ENCODE measurements at regions of chr17 and their contacts with region 1.

Region 1: DNA sequence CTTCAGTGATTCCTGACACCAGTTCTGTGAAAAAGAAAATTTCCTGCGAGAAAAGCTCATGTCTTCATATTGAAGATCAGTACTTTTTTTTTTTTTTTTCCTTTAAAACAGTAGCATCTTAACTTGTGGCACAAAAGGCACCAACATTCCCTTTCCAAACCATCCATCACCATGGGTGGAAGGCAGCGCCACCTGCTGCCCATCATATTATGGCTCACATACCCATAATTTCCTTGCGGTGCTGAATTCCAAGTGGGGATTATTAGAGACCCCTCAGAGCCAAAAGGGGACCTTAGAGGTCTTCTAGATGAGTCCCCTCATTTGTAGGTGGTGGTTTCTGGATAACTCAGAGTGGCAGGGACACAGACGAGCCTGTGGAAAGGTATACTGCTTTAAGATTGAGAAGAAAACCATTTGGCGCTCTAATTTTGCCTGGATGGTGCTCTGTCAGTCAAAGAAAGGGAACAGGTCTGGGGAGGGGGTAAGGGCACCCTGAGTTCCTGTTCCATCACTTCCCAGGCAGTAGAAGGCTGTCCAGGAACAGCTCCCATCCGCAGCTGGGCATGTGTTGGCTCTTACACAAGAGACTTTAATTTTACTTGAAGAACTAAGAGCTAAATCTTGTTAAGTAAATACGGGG is 7.9 kb upstream of the SOST start:
- DNase-seq: no peak
- H3K4me3 ChIP-seq: no peak overlapping the region
- CTCF ChIP-seq: peak; percentile 78

Region 2: DNA sequence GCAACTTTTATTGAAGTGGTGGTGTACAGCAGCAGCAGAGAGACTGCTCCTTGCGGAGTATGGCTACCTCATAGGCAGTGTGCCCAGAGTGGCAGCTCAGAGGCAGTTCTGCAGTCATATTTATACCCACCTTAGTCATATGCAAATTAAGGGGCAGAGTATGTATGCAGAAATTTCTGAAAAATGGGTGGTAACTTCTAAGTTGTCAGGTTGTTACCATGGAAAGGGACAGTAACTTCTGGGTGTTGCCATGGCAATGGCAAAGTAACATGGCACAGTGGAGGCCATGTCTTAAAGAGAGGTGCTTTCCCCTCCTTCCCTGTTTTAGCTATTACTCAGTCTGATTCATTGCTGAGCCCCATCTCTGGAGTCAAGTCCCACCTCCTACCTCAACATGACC is 158.2 kb before region 1 on chr17:
- CTCF ChIA-PET with region 1: no interaction called
- POLR2A ChIA-PET with region 1: no interaction called
- DNase-seq: no peak
- H3K4me3 ChIP-seq: no peak overlapping the region
- CTCF ChIP-seq: no peak

Region 3: DNA sequence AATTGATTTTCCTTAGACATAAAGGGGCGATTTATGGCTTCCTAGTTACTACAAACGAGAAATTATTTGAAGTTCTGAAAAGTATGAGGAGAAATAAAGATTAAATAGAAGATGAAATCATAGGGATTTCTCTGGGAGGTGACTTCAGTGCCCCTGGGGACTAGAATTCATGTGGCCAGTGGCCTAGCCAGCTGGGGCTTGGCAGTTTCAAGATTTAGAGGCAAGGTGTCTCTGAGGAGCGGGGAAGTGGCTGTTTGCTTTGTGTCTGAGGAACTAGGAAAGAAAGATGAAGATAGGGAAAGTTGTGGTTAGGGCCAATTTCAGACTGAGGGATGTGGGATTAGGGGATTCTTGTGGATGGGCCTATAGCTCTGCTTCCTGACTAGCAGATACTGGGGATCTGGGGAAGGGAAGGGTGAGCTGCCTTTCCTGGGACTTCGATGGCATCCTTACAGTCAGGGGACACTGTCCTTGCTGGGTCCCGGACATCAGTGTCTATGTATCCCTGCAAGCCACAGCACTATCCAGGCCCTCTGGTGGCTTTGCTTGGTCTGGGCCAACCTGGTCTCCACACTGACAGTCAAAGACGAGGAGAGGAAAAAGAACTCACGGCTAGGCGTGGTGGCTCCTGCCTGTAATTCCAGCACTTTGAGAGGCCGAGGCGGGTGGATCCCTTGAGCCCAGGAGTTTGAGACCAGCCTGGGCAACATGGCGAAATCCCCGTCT is 82.4 kb before region 1 on chr17:
- CTCF ChIA-PET with region 1: interaction called, 1,463 read pairs
- POLR2A ChIA-PET with region 1: no interaction called
- DNase-seq: no peak
- H3K4me3 ChIP-seq: no peak overlapping the region
- CTCF ChIP-seq: no peak

Region 4: GRCh38 chr17:43713494-43714162 is 52.9 kb before region 1 on chr17:
- CTCF ChIA-PET with region 1: interaction called, 1,463 read pairs
- POLR2A ChIA-PET with region 1: no interaction called
- DNase-seq: no peak
- H3K4me3 ChIP-seq: peak overlapping the region; percentile 52
- CTCF ChIP-seq: no peak

Region 5: GRCh38 chr17:43778337-43779144 is 12.0 kb after region 1 on chr17 and contains the start of gene DUSP3:
- CTCF ChIA-PET with region 1: interaction called, 55 read pairs
- POLR2A ChIA-PET with region 1: no interaction called
- DNase-seq: peak; percentile 40
- H3K4me3 ChIP-seq: peak within 1 kb of the TSS; percentile 95
- CTCF ChIP-seq: no peak

Measured in AG04449 (cell line).